PC-3 (cell line): ENCODE measurements at regions of chr12 and their contacts with region 1.

Region 1: DNA sequence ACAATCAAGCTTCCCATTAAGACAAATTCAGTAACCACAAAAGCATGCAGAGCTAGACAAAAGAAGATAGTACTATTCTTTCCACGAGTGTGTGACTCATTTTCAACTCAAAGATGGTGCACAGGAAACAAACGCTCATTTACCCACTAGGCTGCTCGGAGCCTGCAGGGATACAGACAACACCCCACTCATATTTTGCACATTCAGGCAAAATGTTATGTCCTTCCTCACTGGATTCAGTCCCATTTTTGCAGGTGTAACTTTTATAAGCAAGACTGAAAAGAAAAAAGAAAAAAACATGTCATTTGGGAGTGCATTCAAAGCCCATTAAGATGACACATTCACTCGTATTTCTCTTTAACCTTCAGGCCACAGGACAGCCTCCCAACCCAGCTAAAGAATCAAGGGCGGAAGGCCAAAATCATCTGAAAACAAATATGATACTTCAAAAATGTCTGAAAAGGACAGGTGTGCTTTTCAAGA is 147.5 kb upstream of the KRR1 start:
- DNase-seq: peak; percentile 79
- ATAC-seq: peak; percentile 63
- H3K4me3 ChIP-seq: no peak overlapping the region
- H3K27ac ChIP-seq: peak overlapping the region; percentile 95
- H3K4me1 ChIP-seq: peaks cover 67% of the 10 kb centered on the region
- H3K27me3 ChIP-seq: no peaks in the 10 kb centered on the region
- CTCF ChIP-seq: no peak

Region 2: GRCh38 chr12:75560167-75560566 is 98.8 kb before region 1 on chr12:
- CTCF ChIA-PET with region 1: no interaction called
- POLR2A ChIA-PET with region 1: no interaction called
- intact Hi-C with region 1: loop called (anchors 2 kb)
- DNase-seq: peak; percentile 63
- ATAC-seq: peak; percentile 94
- H3K4me3 ChIP-seq: no peak overlapping the region
- H3K27ac ChIP-seq: no peak overlapping the region
- H3K4me1 ChIP-seq: peaks cover 12% of the 10 kb centered on the region
- H3K27me3 ChIP-seq: no peaks in the 10 kb centered on the region
- CTCF ChIP-seq: peak; percentile 66

Region 3: DNA sequence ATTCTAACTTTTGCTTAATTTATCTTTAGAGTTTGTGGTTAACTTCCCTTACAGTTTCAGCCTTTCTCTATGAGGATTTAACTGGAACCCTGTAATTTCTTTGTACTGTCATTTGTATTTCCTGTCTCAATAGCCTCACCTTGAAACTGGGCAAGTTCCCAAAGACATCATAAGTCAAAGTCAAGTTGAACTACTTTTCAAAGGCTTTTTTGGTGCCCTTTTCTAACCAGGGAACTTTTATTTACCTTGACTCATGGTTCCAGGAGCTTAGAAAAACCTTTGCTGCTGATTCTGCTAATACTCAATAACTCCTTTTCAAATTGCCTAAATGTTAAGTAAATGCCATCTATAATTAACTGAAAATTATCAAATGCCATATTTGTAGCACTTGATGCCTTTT is 53.3 kb after region 1 on chr12:
- CTCF ChIA-PET with region 1: no interaction called
- POLR2A ChIA-PET with region 1: no interaction called
- intact Hi-C with region 1: loop called (anchors 5 kb)
- DNase-seq: peak; percentile 92
- ATAC-seq: peak; percentile 86
- H3K4me3 ChIP-seq: no peak overlapping the region
- H3K27ac ChIP-seq: peak overlapping the region; percentile 70
- H3K4me1 ChIP-seq: peaks cover 30% of the 10 kb centered on the region
- H3K27me3 ChIP-seq: no peaks in the 10 kb centered on the region
- CTCF ChIP-seq: no peak

Region 4: DNA sequence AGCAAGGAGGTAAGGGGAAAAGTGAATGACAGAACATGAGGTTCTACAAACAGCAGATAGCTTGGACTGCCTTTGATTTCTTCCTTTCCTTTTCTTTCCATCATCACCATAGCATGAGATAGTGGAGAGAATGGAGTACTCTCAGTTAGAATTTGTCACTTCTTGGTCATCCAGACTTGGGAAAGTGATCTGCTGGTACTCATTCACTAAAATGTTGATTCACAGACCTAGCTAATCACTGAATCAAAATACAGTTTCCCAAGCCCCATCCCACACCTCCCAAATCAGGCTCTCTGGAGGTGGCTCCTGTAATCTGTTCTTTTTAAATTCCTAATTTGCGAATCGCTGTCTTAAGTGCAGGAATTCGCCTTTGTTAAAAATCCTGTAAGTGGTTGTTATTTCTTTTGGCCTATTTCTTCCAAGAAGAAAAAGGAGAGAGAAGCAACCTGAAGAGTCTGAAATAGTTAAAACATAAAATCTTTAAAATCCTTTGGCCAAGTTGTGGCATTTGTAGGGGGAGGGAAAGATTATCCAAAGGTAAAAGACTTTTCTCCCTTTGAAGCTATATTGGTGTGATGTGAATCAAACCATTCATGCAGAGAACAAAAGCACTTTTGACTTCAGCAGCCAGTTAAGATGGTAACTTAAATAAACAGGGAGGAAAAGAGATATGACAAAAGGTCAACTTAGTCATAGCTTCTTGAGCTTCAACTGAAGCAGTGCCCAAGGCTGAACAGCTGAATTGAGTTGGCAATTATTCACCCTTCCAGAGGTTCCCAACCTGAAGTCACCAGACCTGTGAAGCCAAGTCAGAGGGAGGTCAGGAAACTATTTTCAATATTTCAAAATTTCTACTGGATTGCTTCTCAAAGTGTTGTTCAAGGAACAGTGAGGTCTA is 107.6 kb after region 1 on chr12:
- CTCF ChIA-PET with region 1: no interaction called
- POLR2A ChIA-PET with region 1: interaction called, 14 read pairs
- intact Hi-C with region 1: no loop called
- DNase-seq: peak; percentile 94
- ATAC-seq: peak; percentile 89
- H3K4me3 ChIP-seq: no peak overlapping the region
- H3K27ac ChIP-seq: peak overlapping the region; percentile 85
- H3K4me1 ChIP-seq: peaks cover 35% of the 10 kb centered on the region
- H3K27me3 ChIP-seq: no peaks in the 10 kb centered on the region
- CTCF ChIP-seq: no peak

Region 5: DNA sequence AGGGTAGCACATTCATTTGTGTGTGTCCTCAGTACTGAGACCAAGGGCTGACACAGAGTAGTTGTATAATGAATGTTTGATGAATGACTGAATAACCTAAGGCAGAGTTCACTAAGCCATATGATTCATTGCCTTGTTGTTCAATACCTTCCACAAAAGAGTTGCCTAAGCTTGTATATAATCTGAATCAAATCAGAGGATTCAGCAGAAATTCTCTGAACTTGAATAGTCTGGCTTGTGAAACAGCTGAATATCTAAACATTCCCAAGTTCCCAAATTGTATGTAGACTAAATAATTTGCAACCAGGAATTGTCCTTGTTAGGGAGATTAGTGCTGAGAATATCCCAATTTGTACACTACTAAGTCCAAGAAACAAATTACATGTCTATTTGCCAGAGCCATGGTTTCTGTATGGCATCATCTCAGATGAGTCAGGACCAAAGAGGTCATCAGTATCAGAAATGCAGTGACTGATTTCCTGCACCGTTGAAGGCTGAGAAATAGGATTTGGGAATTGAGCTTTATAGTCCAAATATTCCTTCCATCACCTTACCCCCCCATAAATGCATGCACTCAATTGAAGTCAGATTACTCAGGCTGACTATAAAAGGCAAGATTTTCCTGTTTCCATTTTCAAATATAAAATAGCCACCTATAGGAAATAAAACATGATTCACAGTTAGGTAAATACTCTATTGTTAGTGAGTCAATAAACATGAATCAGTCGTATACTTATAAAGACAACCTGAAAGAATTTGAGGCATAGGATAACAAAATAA is 203.9 kb after region 1 on chr12:
- CTCF ChIA-PET with region 1: no interaction called
- POLR2A ChIA-PET with region 1: interaction called, 4 read pairs
- intact Hi-C with region 1: loop called (anchors 1 kb)
- DNase-seq: peak; percentile 97
- ATAC-seq: peak; percentile 77
- H3K4me3 ChIP-seq: peak overlapping the region; percentile 36; the same call in 1 of the 2 replicates
- H3K27ac ChIP-seq: peak overlapping the region; percentile 98
- H3K4me1 ChIP-seq: peaks cover 57% of the 10 kb centered on the region
- H3K27me3 ChIP-seq: no peaks in the 10 kb centered on the region
- CTCF ChIP-seq: no peak

Region 6: GRCh38 chr12:75954041-75954440 is 295.1 kb after region 1 on chr12:
- CTCF ChIA-PET with region 1: no interaction called
- POLR2A ChIA-PET with region 1: no interaction called
- intact Hi-C with region 1: loop called (anchors 5 kb)
- DNase-seq: peak; percentile 96
- ATAC-seq: peak; percentile 77
- H3K4me3 ChIP-seq: no peak overlapping the region
- H3K27ac ChIP-seq: peak overlapping the region; percentile 89
- H3K4me1 ChIP-seq: peaks cover 49% of the 10 kb centered on the region
- H3K27me3 ChIP-seq: no peaks in the 10 kb centered on the region
- CTCF ChIP-seq: no peak

Region 7: DNA sequence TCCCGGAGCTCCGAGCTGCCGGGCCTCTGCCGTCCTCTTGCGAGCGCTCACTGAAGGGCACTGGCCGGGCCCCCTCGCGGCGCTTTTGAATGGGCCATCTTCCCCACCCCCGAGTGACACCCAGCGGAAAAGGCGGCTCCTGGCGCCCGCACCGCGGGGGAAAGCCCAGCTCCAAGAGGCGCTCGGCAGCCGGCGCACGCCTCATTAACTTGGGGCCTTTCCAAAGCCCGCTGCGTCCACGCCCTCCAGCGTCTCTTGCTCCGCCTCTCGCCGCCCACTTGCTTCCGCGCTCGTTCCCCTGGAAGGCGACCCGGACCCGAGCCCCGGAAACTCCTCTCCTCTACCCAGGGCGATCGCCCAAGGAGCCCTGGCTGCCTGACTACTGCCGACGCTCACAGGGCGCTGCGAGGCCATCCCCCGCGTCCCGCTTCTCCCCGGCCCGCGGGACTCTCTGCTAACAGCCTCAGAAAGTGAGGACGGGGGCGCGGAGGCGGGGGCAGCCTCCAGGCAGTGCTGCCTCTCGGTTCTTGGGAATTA is 372.7 kb after region 1 on chr12 and contains the start of gene PHLDA1:
- CTCF ChIA-PET with region 1: no interaction called
- POLR2A ChIA-PET with region 1: interaction called, 10 read pairs
- intact Hi-C with region 1: no loop called
- DNase-seq: peak; percentile 98
- ATAC-seq: peak; percentile 75
- H3K4me3 ChIP-seq: peak within 1 kb of the TSS; percentile 97
- H3K27ac ChIP-seq: peak within 1 kb of the TSS; percentile 94
- H3K4me1 ChIP-seq: peaks cover 34% of the 10 kb centered on the region
- H3K27me3 ChIP-seq: no peaks in the 10 kb centered on the region
- CTCF ChIP-seq: peak; percentile 34; the same call in 1 of the 2 replicates
- total RNA-seq, gene PHLDA1: 181 and 218 TPM in 2 replicates